ENCODE measurements at regions of chr2 and their contacts with region 1.

Region 1: GRCh38 chr2:1742681-1743395 is 1.5 kb downstream of the PXDN start:
- DNase-seq: peak; percentile 88
- H3K4me3 ChIP-seq: peak overlapping the region; percentile 59 to 82 (median 67)
- H3K27ac ChIP-seq: peak overlapping the region; percentile 87
- H3K4me1 ChIP-seq: peaks cover 25% of the 10 kb centered on the region
- H3K27me3 ChIP-seq: peaks cover 0 to 4% of the 10 kb centered on the region in 2 experiments
- CTCF ChIP-seq: peak; percentile 56 to 62
- POLR2A ChIP-seq: peak; percentile 21

Region 2: GRCh38 chr2:1591978-1592907 is 150.6 kb before region 1 on chr2:
- CTCF ChIA-PET with region 1: interaction called, 5 read pairs
- POLR2A ChIA-PET with region 1: no interaction called
- dilution Hi-C with region 1: no loop called
- intact Hi-C with region 1: loop called (anchors 1 kb)
- DNase-seq: peak; percentile 79
- H3K4me3 ChIP-seq: no peak overlapping the region
- H3K27ac ChIP-seq: no peak overlapping the region
- H3K4me1 ChIP-seq: peaks cover 12% of the 10 kb centered on the region
- H3K27me3 ChIP-seq: no peaks in the 10 kb centered on the region
- CTCF ChIP-seq: peak; percentile 68 to 83
- POLR2A ChIP-seq: no peak

Region 3: DNA sequence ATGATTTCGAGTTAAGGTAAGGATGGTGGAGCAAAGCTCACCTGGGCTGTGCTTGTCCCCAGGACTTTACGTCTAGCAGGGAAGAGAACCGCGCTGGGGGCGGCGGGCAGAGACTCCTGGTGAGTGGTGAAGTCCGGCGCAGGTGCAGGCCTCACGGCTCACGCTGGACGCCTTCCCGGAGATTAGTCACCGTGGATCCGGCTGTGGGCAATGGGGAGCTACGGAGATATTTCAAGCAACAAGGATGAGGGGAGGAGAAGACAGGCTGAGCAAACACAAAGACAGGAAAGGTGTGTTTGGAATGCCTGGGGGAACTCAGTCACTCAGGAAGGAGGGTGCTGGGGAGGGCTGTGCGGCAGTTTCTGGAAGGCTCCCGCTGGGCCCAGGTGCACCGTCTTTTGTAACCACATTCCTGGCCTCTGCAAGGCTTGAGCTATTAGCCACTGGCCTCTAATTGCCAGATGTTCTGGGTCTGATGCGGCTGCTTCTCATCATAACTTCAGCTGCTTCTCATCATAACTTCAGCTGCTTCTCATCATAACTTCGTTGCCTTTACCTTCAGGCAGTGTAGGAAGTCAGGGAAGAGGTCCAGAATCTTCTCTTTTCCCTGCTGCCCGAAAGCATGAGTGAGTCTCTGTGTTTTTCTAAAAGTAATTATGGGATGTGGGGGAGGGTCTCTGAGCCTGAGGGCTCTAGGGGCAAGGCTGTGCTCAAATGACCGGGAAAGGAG is 117.5 kb before region 1 on chr2:
- CTCF ChIA-PET with region 1: interaction called, 3 read pairs
- POLR2A ChIA-PET with region 1: no interaction called
- dilution Hi-C with region 1: no loop called
- intact Hi-C with region 1: loop called (anchors 1 kb)
- DNase-seq: peak; percentile 92
- H3K4me3 ChIP-seq: no peak overlapping the region
- H3K27ac ChIP-seq: peak overlapping the region; percentile 79
- H3K4me1 ChIP-seq: peaks cover 23% of the 10 kb centered on the region
- H3K27me3 ChIP-seq: no peaks in the 10 kb centered on the region
- CTCF ChIP-seq: no peak
- POLR2A ChIP-seq: peak; percentile 41

Region 4: DNA sequence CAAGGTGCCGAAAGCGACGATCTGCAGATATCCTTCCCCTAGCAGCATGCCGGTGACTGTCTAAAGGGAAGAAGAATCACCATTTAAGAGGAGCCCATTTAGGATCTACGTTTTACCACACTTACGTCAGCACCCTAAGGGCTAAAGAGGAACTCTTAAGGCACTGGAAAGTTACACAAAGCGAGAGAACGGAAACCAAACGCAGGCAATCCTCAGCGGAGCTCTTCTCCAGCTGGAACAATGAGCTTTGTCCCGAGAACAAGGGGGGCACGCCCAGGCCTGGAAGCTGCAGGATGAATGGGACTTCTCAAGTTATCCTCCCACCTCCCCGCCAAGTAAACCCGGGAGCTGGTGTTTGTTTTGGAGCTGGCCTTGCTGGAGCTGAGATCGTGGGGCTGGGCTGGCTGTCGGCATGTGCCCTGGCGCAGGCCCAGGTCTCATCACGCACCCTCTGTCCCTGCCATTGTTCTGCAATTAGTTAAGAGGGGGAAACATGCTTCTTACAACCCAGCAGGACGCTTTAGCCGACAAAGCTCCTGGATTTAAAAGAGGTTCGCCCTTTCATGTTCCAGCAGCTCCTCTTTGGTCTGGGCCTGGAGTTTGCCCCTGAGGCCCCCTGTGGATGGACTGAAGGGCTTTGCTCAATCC is 34.9 kb before region 1 on chr2:
- CTCF ChIA-PET with region 1: interaction called, 7 read pairs
- POLR2A ChIA-PET with region 1: interaction called, 3 read pairs
- dilution Hi-C with region 1: no loop called
- intact Hi-C with region 1: loop called (anchors 1 kb)
- DNase-seq: peak; percentile 92
- H3K4me3 ChIP-seq: no peak overlapping the region
- H3K27ac ChIP-seq: peak overlapping the region; percentile 71
- H3K4me1 ChIP-seq: peaks cover 18% of the 10 kb centered on the region
- H3K27me3 ChIP-seq: no peaks in the 10 kb centered on the region
- CTCF ChIP-seq: no peak
- POLR2A ChIP-seq: peak; percentile 20

Region 5: DNA sequence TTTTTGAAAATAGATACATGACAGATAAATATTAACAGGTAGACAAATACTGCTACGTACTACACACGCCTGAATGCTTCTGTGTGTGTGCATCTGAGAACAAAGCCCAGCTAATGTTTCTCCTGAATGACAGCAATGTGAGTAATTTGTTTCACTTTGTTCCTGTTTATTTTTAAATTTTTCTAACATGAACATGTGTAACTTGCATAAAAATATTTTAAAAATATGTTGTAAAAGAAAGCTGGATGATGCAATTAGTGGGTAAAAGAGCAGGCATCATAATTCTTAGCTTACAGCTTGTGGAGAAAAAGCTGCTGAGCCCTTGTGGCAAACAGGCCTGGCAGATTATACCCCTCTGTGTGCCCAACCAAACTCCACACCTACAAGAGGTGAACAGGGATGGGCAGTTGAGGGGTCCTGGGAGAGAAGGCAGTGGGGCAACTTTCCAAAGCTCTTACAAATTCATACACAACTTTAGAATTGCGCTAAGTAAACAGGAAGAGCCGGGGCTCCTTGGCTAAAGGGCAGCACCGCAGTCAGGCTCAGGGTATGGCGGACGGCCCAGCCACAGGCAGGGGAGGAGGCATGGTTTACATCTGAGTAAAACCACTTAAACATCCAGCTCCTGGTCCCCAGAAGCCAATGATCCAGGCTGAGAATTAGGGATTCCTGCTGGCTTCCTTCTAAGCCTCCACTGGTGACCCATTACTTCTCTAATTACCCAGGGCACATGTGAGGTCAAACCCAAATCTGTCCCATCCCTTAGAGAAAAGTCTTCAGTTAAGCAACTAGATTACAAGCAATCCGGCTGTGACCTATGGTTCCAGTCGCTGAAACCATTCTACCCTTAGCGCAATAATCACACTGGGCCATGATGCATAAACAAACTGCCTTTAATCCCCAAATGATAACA is 12.6 kb before region 1 on chr2:
- CTCF ChIA-PET with region 1: interaction called, 15 read pairs
- POLR2A ChIA-PET with region 1: no interaction called
- dilution Hi-C with region 1: no loop called
- intact Hi-C with region 1: loop called (anchors 1 kb)
- DNase-seq: peak; percentile 54
- H3K4me3 ChIP-seq: peak overlapping the region in 1 of 3 experiments; percentile 5
- H3K27ac ChIP-seq: peak overlapping the region; percentile 65
- H3K4me1 ChIP-seq: peaks cover 19% of the 10 kb centered on the region
- H3K27me3 ChIP-seq: no peaks in the 10 kb centered on the region
- CTCF ChIP-seq: no peak
- POLR2A ChIP-seq: no peak

Region 6: DNA sequence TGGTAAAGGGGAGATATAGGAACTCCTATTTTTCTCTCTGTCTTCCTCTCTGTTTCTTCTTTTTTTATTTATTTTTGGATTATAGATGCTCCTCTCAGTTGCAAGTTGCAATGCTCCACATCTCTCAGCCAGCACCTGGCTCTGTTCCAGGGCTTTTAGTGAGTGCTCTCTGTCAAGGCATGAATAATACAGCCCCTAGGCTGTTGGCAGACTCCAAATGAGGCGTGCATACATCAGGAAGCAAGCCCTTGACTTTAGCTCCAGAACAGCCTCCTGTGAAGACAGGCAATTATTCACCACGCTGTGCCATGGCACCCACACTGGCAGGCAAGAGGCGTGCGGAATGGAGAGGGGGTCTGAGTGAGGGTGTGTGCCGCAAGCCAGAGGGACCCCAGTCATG is 229.6 kb after region 1 on chr2:
- CTCF ChIA-PET with region 1: no interaction called
- POLR2A ChIA-PET with region 1: no interaction called
- dilution Hi-C with region 1: no loop called
- intact Hi-C with region 1: no loop called
- DNase-seq: no peak
- H3K4me3 ChIP-seq: no peak overlapping the region
- H3K27ac ChIP-seq: no peak overlapping the region
- H3K4me1 ChIP-seq: no peaks in the 10 kb centered on the region
- H3K27me3 ChIP-seq: no peaks in the 10 kb centered on the region
- CTCF ChIP-seq: no peak
- POLR2A ChIP-seq: no peak